MCF 10A (cell line): ENCODE measurements at regions of chr2 and their contacts with region 1.

Region 1: DNA sequence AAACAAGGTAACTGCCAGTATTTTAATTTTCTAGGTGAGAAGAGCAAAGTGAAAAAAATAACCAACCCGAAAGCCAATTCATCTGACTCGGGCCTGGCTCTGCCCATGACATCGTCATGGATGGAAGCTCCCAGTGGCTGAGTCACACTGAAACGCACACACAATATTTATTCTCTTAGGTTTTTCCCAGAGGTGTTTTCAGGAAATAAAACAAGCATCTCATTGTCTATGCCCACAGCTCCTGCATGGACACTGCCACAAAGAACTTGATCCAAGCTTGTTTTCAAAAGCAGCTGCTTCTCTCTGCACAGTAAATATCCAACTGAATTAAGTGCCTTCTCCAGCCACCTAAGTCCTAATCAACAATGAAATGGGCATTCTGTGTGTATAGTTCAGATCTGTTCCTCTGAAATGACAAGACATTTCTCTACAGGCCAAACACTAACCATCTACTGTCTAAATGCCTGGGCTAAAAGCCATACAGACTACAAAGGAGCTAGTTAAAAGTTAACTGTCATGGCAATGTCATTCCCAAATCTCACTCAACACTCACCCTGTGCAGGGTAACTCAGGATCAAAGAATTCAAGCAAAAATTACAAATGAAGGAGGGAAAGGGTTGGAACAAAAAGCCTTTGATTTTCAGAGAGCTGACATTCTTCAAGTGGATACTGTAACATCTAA is 62.9 kb downstream of the RPL31 start:
- DNase-seq: peak; percentile 76
- H3K4me3 Mint-ChIP-seq: peak overlapping the region; percentile 48
- H3K27ac Mint-ChIP-seq: peak overlapping the region; percentile 85
- H3K4me1 Mint-ChIP-seq: peaks cover 47% of the 10 kb centered on the region
- H3K27me3 Mint-ChIP-seq: no peaks in the 10 kb centered on the region
- CTCF ChIP-seq: no peak

Region 2: GRCh38 chr2:101036562-101037457 is 28.2 kb before region 1 on chr2:
- CTCF ChIA-PET with region 1: interaction called, 12 read pairs
- POLR2A ChIA-PET with region 1: no interaction called
- intact Hi-C with region 1: no loop called
- DNase-seq: peak; percentile 35
- H3K4me3 Mint-ChIP-seq: no peak overlapping the region
- H3K27ac Mint-ChIP-seq: no peak overlapping the region
- H3K4me1 Mint-ChIP-seq: peaks cover 5% of the 10 kb centered on the region
- H3K27me3 Mint-ChIP-seq: no peaks in the 10 kb centered on the region
- CTCF ChIP-seq: peak; percentile 53

Region 3: DNA sequence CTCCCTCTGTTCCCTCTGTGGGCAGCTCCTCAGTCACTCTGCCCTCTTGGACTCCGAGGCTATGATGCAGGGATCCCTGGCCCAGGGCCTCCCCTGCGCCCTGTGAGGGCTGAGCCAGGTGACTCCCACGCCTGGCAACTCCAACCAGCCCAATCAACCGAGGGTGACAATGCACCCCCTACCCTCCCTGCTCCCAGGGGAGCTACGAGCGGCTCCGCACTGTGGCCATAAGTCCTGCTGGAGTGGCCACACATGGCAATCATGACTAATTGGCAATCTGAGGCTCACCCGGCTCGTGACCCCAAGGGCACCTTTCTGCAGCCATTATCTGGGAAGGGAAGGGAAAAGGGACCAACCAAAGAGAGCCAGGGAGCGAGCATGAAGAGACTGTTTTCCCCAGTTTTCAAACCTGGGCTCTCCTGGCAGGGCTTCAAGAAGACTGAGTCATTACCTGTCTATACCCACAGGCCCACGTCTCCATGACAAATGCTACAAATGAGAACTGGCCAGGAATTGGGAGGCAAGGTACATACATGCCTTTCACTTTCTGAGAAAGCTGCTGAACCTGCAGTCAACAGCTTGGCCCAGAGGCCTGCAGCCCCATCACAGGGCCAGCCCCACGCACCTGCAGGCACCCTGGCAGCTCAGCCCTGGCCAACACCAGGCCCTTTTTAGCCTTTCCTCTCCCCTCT is 17.8 kb before region 1 on chr2:
- CTCF ChIA-PET with region 1: interaction called, 5 read pairs
- POLR2A ChIA-PET with region 1: interaction called, 26 read pairs
- intact Hi-C with region 1: no loop called
- DNase-seq: peak; percentile 97
- H3K4me3 Mint-ChIP-seq: no peak overlapping the region
- H3K27ac Mint-ChIP-seq: peak overlapping the region; percentile 91
- H3K4me1 Mint-ChIP-seq: peaks cover 13% of the 10 kb centered on the region
- H3K27me3 Mint-ChIP-seq: no peaks in the 10 kb centered on the region
- CTCF ChIP-seq: no peak

Region 4: DNA sequence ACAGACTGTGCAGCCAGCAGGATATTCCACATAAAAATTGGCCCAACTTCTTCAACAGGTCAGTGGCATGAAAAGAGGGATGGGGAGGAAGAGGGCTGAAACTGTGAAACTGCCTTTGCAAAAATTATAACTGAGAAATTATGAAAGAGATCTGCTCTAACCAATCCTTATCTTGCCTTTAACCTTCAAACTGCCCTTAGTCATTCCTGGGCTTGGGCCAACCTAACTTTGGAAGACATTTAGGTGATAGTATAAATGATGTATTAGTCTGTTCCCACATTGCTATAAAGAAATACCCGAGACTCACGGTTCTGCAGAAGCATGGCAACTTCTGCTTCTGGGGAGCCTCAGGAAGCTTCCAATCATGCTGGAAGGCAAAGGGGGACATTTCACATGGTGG is 11.6 kb after region 1 on chr2:
- CTCF ChIA-PET with region 1: interaction called, 3 read pairs
- POLR2A ChIA-PET with region 1: interaction called, 25 read pairs
- intact Hi-C with region 1: no loop called
- DNase-seq: no peak
- H3K4me3 Mint-ChIP-seq: no peak overlapping the region
- H3K27ac Mint-ChIP-seq: peak overlapping the region; percentile 63
- H3K4me1 Mint-ChIP-seq: peaks cover 42% of the 10 kb centered on the region
- H3K27me3 Mint-ChIP-seq: no peaks in the 10 kb centered on the region
- CTCF ChIP-seq: no peak

Region 5: GRCh38 chr2:101113396-101114267 is 48.6 kb after region 1 on chr2:
- CTCF ChIA-PET with region 1: interaction called, 4 read pairs
- POLR2A ChIA-PET with region 1: interaction called, 14 read pairs
- intact Hi-C with region 1: no loop called
- DNase-seq: peak; percentile 95
- H3K4me3 Mint-ChIP-seq: peak overlapping the region; percentile 67
- H3K27ac Mint-ChIP-seq: peak overlapping the region; percentile 90
- H3K4me1 Mint-ChIP-seq: peaks cover 47% of the 10 kb centered on the region
- H3K27me3 Mint-ChIP-seq: no peaks in the 10 kb centered on the region
- CTCF ChIP-seq: no peak

Region 6: GRCh38 chr2:101120172-101120996 is 55.4 kb after region 1 on chr2:
- CTCF ChIA-PET with region 1: no interaction called
- POLR2A ChIA-PET with region 1: interaction called, 23 read pairs
- intact Hi-C with region 1: no loop called
- DNase-seq: peak; percentile 99
- H3K4me3 Mint-ChIP-seq: peak overlapping the region; percentile 40
- H3K27ac Mint-ChIP-seq: peak overlapping the region; percentile 89
- H3K4me1 Mint-ChIP-seq: peaks cover 52% of the 10 kb centered on the region
- H3K27me3 Mint-ChIP-seq: no peaks in the 10 kb centered on the region
- CTCF ChIP-seq: no peak

Region 7: DNA sequence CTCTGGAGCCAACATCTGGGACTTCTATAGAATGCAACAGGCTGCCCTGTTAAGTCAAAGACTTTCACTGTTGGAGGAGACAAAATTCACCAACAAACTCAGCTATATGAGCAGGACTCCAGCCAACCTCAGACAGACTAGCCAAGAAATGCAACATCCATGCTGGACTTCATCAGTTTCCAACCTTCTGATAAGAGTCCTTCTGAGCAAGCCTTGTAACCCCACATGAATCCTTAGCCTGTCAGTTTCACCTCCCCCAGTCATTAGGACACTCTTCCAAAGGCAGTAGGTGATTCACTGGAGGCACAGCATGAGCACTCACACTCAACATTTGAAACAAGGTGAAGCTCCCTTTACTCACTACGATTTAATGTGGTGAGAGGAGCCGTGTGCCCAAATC is 80.4 kb after region 1 on chr2:
- CTCF ChIA-PET with region 1: interaction called, 5 read pairs
- POLR2A ChIA-PET with region 1: interaction called, 26 read pairs
- intact Hi-C with region 1: loop called (anchors 1 kb)
- DNase-seq: peak; percentile 71
- H3K4me3 Mint-ChIP-seq: peak overlapping the region; percentile 56
- H3K27ac Mint-ChIP-seq: peak overlapping the region; percentile 61
- H3K4me1 Mint-ChIP-seq: peaks cover 77% of the 10 kb centered on the region
- H3K27me3 Mint-ChIP-seq: no peaks in the 10 kb centered on the region
- CTCF ChIP-seq: no peak

Region 8: DNA sequence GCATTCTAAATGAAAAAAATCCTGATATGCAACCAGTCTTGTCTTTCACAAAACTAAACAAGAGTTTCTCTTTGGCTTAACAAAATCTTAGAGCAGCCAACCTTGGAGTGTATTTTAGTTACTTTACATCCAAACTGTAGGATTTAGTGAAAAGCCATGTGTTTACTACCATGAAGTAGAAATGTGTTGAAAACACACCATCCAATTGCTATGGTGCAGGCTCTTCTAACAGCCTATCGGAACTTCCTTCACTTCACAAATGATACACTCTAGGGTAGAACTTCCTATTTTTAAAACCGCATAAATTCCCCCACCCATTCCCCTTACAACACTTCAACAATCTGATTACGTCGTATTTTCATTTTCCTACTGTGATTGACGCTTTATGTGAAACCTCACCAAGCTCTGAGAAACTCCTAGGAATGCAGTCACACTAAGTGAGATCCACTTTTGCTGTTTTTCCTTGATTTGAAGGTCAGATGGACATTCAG is 558.1 kb after region 1 on chr2:
- CTCF ChIA-PET with region 1: no interaction called
- POLR2A ChIA-PET with region 1: no interaction called
- intact Hi-C with region 1: no loop called
- DNase-seq: no peak
- H3K4me3 Mint-ChIP-seq: no peak overlapping the region
- H3K27ac Mint-ChIP-seq: no peak overlapping the region
- H3K4me1 Mint-ChIP-seq: peaks cover 8% of the 10 kb centered on the region
- H3K27me3 Mint-ChIP-seq: no peaks in the 10 kb centered on the region
- CTCF ChIP-seq: no peak